Activated B cell treated with CpG ODN at 0.5 μM for 24 hours (primary cell): ENCODE measurements at regions of chr10 and their contacts with region 1.

Region 1: GRCh38 chr10:50362547-50363125 is 111.3 kb upstream of the ASAH2 start:
- DNase-seq: no peak
- ATAC-seq: peak; percentile 92
- H3K4me3 Mint-ChIP-seq: peak overlapping the region; percentile 29
- H3K27ac Mint-ChIP-seq: peak overlapping the region; percentile 87
- H3K4me1 Mint-ChIP-seq: peaks cover 53% of the 10 kb centered on the region
- H3K27me3 Mint-ChIP-seq: no peaks in the 10 kb centered on the region
- CTCF ChIP-seq: no peak

Region 2: DNA sequence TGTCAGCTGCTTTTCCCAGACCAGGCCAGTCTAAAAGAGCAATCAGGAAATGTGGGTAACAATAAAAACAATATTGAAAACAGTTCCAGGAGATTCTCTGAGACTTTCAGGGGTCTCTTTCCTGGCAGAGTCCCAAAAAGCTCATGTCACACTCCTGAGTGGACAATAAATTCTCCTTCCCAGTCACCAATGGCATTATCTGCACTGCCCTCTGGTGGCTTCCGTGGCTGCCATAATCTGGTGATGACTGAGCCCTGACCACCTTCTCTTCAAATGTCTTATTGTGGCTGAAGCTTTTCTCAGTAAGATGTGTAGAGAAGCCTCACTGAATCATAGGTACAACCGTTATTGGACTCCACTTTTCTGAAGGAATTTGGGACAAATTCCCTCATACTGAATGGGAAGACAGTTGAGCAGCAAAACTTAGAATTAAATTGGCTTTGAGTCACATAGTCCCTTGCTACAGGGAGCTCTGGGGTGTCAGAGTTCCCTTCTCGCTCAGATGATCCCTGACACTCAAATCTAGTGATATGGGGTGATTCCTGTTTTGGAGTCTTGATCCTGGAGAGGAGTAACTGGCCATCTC is 86.9 kb before region 1 on chr10:
- CTCF ChIA-PET with region 1: interaction called, 4 read pairs
- POLR2A ChIA-PET with region 1: no interaction called
- intact Hi-C with region 1: loop called (anchors 2 kb)
- DNase-seq: no peak
- ATAC-seq: peak; percentile 71
- H3K4me3 Mint-ChIP-seq: no peak overlapping the region
- H3K27ac Mint-ChIP-seq: no peak overlapping the region
- H3K4me1 Mint-ChIP-seq: peaks cover 1% of the 10 kb centered on the region
- H3K27me3 Mint-ChIP-seq: peaks cover 13% of the 10 kb centered on the region
- CTCF ChIP-seq: no peak

Region 3: DNA sequence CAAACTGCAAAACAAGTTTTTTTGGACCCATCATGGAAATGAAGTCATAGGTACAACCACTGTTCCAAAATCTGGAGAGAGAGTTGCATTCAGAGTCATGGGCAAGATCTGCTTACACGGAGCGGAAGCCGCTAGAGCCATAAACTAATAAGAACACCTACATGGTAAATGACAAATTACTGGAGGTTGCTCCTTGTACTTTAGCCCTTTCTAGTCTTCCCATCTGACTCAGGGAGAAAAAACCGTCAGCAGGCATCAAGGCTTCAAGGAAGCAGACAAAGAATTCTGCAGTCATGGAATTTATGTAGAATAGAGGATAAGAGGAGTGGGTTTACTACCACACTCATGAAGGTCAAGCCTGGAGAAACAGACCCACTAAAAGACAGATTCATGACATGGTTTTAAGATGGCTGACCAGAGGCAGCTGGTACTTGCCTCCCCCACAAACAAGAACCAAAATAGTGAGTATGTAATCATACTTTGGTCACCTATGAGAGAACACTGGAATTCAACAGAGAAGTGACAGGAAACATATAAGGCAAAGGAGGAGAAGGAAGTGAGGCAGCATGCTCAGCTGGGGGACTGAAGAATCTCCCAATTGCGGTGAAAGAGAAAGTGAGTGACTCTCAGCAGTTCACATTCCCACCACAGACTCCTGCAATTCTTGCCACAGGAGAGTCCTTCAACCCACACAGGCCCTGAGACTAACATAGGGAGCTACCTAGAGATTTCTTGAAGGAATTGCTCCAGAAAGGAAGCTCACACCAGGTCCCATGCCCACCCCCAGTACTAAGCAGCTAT is 68.9 kb before region 1 on chr10:
- CTCF ChIA-PET with region 1: no interaction called
- POLR2A ChIA-PET with region 1: no interaction called
- intact Hi-C with region 1: no loop called
- DNase-seq: no peak
- ATAC-seq: no peak
- H3K4me3 Mint-ChIP-seq: no peak overlapping the region
- H3K27ac Mint-ChIP-seq: no peak overlapping the region
- H3K4me1 Mint-ChIP-seq: no peaks in the 10 kb centered on the region
- H3K27me3 Mint-ChIP-seq: no peaks in the 10 kb centered on the region
- CTCF ChIP-seq: no peak

Region 4: GRCh38 chr10:50336140-50336539 is 26.5 kb before region 1 on chr10:
- CTCF ChIA-PET with region 1: no interaction called
- POLR2A ChIA-PET with region 1: no interaction called
- intact Hi-C with region 1: no loop called
- DNase-seq: no peak
- ATAC-seq: no peak
- H3K4me3 Mint-ChIP-seq: peak overlapping the region; percentile 41
- H3K27ac Mint-ChIP-seq: peak overlapping the region; percentile 25
- H3K4me1 Mint-ChIP-seq: peaks cover 19% of the 10 kb centered on the region
- H3K27me3 Mint-ChIP-seq: no peaks in the 10 kb centered on the region
- CTCF ChIP-seq: no peak

Region 5: DNA sequence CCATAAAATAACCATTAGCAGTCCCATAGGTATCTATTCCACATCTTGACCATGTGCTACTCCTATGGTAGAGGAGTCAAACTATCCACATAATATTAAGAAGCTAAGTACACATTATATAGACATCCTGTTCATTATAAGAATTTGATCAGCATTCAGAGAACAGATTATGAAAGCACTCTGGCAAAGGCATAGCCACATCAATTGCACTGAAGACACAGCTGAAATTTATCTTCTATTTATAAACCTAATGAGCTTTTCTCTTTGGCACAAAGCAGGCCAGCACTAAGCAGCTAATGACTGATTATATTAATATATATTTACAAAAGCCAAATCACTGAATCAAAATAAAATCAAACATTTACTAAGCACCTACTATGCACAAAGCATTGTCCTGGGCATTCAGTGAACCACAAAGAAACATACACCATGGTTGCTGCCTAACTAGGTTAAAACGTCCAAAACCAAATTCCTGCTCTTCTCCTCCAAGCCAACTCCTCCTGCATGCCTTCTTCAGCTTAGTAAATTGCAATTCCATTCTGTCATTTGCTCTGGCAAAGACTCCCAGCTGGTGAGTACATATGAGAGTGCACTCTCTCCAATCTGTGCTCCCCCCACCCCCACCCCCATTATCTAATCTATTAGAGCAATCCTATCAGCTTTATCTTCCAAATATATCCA is 11.3 kb after region 1 on chr10:
- CTCF ChIA-PET with region 1: no interaction called
- POLR2A ChIA-PET with region 1: no interaction called
- intact Hi-C with region 1: loop called (anchors 1 kb)
- DNase-seq: no peak
- ATAC-seq: no peak
- H3K4me3 Mint-ChIP-seq: no peak overlapping the region
- H3K27ac Mint-ChIP-seq: no peak overlapping the region
- H3K4me1 Mint-ChIP-seq: peaks cover 3% of the 10 kb centered on the region
- H3K27me3 Mint-ChIP-seq: no peaks in the 10 kb centered on the region
- CTCF ChIP-seq: no peak

Region 6: GRCh38 chr10:50508315-50509051 is 145.8 kb after region 1 on chr10:
- CTCF ChIA-PET with region 1: no interaction called
- POLR2A ChIA-PET with region 1: no interaction called
- intact Hi-C with region 1: loop called (anchors 5 kb)
- DNase-seq: no peak
- ATAC-seq: peak; percentile 80
- H3K4me3 Mint-ChIP-seq: peak overlapping the region; percentile 20
- H3K27ac Mint-ChIP-seq: peak overlapping the region; percentile 61
- H3K4me1 Mint-ChIP-seq: peaks cover 64% of the 10 kb centered on the region
- H3K27me3 Mint-ChIP-seq: no peaks in the 10 kb centered on the region
- CTCF ChIP-seq: no peak